ENCODE measurements at regions of chr12 and their contacts with region 1.

Region 1: GRCh38 chr12:53159195-53159839 is 21.2 kb upstream of the ZNF740 start:
- DNase-seq: peak; percentile 84
- ATAC-seq: peak; percentile 88 to 91

Region 2: DNA sequence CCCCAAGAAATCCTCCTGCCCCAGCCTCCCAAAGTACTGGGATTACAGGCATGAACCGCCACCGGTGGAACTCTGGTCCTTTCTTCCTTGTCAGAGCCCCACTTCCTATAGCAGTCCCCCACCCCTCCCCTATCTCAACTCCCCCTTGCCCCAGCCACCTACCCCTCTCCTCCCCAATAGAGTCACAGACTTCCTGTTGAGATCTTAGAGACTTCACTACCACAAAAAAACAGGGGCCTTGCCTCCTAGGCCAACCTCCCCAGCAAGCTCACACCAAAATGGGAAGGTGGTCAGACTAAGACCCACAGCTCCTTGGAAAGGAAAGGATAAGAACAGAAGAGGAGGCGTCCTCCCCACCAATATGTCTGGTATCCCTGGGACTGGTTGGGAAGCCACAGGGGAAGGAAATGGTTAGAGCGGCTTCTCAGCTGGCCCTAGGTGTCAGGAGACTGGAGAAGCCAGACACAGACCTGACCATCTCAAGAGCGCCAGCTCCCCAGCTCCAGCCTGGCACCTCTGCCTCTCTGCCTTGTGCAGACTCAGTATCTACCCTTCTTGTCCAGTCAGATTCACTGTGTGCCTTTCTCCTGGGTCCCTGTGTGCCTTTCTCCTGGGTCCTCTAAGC is 39.3 kb after region 1 on chr12:
- intact Hi-C with region 1: loop called (anchors 2 to 5 kb)
- DNase-seq: no peak
- ATAC-seq: no peak

Measured in left cardiac atrium (tissue), 4 donors.